GM10248 (cell line): ENCODE measurements at regions of chr2 and their contacts with region 1.

Region 1: GRCh38 chr2:209824391-209824790 is 52.8 kb downstream of the UNC80 start:
- DNase-seq: no peak
- CTCF ChIP-seq: no peak

Region 2: GRCh38 chr2:209834767-209835166 is 10.4 kb after region 1 on chr2:
- CTCF ChIA-PET with region 1: interaction called, 13 read pairs
- POLR2A ChIA-PET with region 1: no interaction called
- DNase-seq: no peak
- CTCF ChIP-seq: no peak